ENCODE measurements at regions of chr11 and their contacts with region 1.

Region 1: DNA sequence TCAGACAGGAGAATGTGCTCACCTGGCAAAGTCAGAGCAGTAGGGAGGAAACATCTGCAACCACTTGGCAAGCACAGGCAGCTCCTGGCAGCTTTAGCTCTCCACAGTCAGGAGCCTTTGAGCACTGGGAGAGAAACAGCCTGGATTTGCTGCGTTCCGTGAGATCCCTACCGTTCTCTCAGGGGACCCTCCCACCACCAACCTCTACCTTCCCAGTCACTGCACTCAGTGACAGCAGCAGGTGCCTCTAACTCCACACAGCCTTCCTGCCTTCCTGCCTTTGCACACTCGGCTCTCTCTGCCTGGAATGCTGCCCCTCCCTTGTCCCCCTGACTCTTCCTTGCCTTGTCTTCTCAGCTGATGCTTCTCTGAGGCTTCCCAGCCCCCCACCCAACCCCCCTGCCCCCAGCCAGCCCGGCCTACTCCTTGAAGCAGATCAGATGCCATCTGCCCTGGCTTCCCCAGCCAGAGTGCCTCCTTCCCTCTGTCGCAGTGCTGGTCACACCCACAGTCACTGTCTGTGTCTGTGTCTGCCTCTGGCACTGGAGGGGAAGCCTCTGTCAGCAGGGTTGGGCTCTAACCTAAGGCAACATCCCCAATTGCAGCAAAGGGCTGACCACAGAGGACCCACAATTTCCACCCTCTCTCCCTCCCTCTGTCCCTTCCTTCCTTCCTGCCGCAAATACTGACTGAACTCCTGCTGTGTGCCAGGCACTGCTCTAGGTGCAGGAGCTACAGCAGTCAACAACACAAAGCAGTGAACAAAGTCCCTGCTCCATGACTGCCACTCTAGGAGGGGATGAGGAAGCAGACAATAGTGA is 14.9 kb upstream of the TSKU start:
- DNase-seq: peak in 4 of 9 donors; percentile 7 to 27 (median 15)
- ATAC-seq: peak; percentile 86
- H3K4me3 ChIP-seq: no peak overlapping the region
- H3K4me3 Mint-ChIP-seq: peak overlapping the region in 7 of 10 donors; percentile 13 to 71 (median 48)
- H3K27ac ChIP-seq: no peak overlapping the region
- H3K27ac Mint-ChIP-seq: peak overlapping the region in 7 of 9 donors; percentile 7 to 87 (median 70)
- H3K4me1 ChIP-seq: peaks cover 7 to 9% of the 10 kb centered on the region in 2 donors
- H3K4me1 Mint-ChIP-seq: peaks cover 6 to 49% (median 21%) of the 10 kb centered on the region in 7 donors
- H3K27me3 ChIP-seq: no peaks in the 10 kb centered on the region
- H3K27me3 Mint-ChIP-seq: peaks cover 0 to 7% (median 2%) of the 10 kb centered on the region in 5 donors

Region 2: DNA sequence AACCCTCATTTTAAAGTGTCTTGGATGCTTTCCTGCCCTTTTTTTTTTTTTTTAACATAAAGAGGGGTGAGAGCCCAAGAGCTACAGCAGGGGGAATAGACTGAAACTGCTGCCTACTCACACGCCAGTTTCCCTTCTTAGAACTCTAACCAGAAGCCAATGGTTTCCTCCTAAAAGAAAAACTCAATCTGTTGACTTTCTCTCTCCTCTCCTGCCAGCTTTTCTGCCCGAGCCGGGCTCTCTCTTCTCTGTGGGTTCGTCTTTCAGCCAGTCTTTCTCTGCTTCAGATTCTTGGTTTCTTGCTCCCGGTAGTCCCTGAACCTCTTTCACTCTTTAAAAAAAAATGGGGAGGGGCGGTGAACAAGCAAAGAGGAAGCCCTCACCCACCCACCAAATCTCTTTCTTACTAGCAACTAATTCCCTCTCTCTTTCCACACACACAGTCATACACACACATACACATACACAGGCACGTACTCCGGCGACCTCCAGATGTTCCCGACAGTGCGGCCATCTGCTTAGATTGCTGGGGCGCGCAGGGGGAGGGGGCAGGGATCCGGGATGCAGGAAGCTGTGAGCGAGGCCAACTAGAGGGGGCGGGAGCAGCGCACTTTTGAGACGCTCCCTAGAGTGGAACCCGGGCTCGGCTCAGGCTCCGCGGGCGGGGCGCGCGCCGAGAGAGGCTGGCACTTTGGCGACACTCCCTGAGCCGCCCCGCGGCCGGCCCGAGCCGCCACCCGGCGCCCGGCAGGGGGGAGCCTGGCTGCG is 14.4 kb after region 1 on chr11:
- CTCF ChIA-PET with region 1: no interaction called
- POLR2A ChIA-PET with region 1: no interaction called
- intact Hi-C with region 1: loop called in 1 of 2 experiments (anchors 2 kb)
- DNase-seq: peak in 2 of 9 donors; percentile 7 to 64
- ATAC-seq: peak; percentile 44
- H3K4me3 ChIP-seq: peak overlapping the region; percentile 37
- H3K4me3 Mint-ChIP-seq: peak overlapping the region; percentile 66 to 93 (median 82)
- H3K27ac ChIP-seq: no peak overlapping the region
- H3K27ac Mint-ChIP-seq: peak overlapping the region in 1 of 9 donors; percentile 85
- H3K4me1 ChIP-seq: peaks cover 0 to 4% of the 10 kb centered on the region in 2 donors
- H3K4me1 Mint-ChIP-seq: peaks cover 4 to 16% (median 8%) of the 10 kb centered on the region in 7 donors
- H3K27me3 ChIP-seq: peaks cover 4 to 8% of the 10 kb centered on the region in 2 donors
- H3K27me3 Mint-ChIP-seq: peaks cover 46 to 70% (median 51%) of the 10 kb centered on the region in 5 donors